ENCODE measurements at regions of chr12 and their contacts with region 1.

Region 1: DNA sequence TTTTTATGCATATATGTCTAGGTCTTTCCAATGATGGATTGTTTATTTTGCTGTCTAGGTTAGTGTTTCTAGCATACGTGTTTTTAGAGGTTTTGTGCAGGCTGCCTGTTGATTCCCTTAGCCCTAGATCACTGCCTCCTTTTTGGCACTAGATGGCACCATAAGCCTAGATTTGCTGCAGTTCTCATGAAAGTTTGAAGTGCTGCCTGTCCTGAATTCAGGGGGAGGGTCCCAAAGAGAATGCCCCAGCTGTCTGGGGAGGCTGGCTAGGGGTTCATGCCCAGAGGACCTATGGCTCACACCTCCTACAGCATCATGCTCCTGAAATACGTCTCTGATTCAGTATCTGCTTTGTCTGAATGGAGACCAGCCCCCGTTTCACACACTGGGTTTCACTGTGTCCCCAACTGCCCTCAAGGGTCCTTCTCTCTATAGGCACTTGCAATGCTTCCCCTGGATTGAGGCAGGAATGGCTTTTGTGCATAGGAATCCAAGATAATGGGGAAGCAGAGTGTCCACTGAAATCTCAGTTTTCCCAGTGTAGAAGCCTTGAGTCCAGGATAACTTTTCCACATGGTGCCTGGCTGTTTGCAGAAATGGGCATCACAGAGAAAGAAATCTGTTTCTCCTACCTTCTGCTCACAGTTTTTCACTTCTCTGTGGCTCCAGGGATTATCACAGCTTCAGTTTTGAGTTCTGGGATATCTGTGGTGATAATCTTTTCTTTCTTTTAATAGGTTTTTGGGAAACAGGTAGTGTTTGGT is 14.2 kb upstream of the TXNRD1 start:
- DNase-seq: peak; percentile 54
- ATAC-seq: peak; percentile 80
- H3K4me3 Mint-ChIP-seq: no peak overlapping the region
- H3K27ac Mint-ChIP-seq: no peak overlapping the region
- H3K4me1 Mint-ChIP-seq: peaks cover 2% of the 10 kb centered on the region
- H3K27me3 Mint-ChIP-seq: peaks cover 8% of the 10 kb centered on the region
- CTCF ChIP-seq: peak; percentile 88

Region 2: DNA sequence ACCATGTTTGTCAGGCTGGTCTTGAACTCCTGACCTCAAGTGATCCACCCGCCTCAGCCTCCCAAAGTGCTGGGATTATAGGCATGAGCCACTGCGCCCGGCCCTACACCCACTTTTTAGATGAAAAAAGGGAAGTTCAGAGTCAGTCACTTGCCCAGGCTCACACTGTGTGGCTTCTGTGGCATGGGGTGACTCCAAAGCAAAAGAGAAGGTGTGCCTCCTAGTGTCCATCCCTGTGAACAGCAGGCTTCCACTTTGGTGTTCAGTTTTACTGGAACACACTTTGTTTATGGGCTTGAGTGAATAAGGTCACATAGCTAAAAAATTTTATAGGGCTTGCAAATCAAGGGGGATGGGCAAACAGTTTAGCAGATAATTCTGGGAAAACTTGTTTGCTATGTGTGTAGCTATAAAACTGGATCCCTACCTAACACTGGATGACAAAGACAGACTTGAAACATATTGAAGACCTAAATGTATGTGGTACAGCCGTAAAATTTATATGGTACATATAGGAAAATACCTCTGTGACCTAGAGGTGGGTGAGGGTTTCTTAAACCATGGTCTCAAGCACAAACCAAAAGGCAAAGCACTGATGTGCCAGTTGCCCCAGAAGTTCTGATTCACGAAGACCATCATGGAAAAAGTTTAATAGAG is 157.1 kb after region 1 on chr12:
- CTCF ChIA-PET with region 1: interaction called, 23 read pairs
- POLR2A ChIA-PET with region 1: no interaction called
- intact Hi-C with region 1: loop called (anchors 2 kb)
- DNase-seq: peak; percentile 80
- ATAC-seq: peak; percentile 96
- H3K4me3 Mint-ChIP-seq: no peak overlapping the region
- H3K27ac Mint-ChIP-seq: no peak overlapping the region
- H3K4me1 Mint-ChIP-seq: peaks cover 2% of the 10 kb centered on the region
- H3K27me3 Mint-ChIP-seq: no peaks in the 10 kb centered on the region
- CTCF ChIP-seq: peak; percentile 79